Psoas muscle (tissue), 8 donors: ENCODE measurements at regions of chr11 and their contacts with region 1.

Region 1: DNA sequence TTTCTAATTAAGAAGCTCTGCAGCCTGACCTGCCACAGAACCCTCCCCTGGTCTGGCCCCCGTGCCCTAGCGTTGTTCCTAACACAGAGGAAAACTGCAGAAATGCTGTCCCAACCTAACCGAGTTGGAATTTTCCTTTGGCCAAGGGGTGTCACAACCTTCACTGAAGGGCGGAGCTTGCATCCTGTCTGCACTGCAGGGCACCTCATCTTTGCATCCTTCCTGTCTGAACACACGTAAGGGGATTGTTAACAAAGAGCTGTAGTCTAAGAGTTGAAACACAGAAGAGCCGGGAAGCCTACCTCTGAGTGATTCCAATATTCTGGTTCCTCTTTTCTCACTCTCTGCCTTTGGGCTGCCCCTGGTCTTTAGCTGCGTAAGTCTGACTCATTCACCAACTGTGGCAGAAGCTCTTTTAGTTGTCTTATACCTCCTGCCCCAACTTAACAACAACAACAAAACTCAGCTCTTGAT is 1.6 kb downstream of the DIXDC1 start:
- DNase-seq: no peak
- ATAC-seq: peak; percentile 31 to 39 (median 36)
- H3K4me3 ChIP-seq: peak overlapping the region; percentile 86
- H3K27ac ChIP-seq: peak overlapping the region; percentile 89
- H3K4me1 ChIP-seq: peaks cover 49% of the 10 kb centered on the region
- H3K27me3 ChIP-seq: no peaks in the 10 kb centered on the region
- CTCF ChIP-seq: no peak

Region 2: GRCh38 chr11:111957663-111958444 is 19.1 kb after region 1 on chr11:
- intact Hi-C with region 1: loop called in 1 of 2 experiments (anchors 2 kb)
- DNase-seq: peak; percentile 62 to 86
- ATAC-seq: peak; percentile 92 to 94 (median 93)
- H3K4me3 ChIP-seq: no peak overlapping the region
- H3K27ac ChIP-seq: peak overlapping the region; percentile 65
- H3K4me1 ChIP-seq: peaks cover 24% of the 10 kb centered on the region
- H3K27me3 ChIP-seq: no peaks in the 10 kb centered on the region
- CTCF ChIP-seq: no peak

Region 3: GRCh38 chr11:111982019-111982464 is 43.3 kb after region 1 on chr11:
- intact Hi-C with region 1: loop called (anchors 2 kb)
- DNase-seq: peak in 1 of 2 donors; percentile 37
- ATAC-seq: peak; percentile 70 to 80 (median 80)
- H3K4me3 ChIP-seq: no peak overlapping the region
- H3K27ac ChIP-seq: no peak overlapping the region
- H3K4me1 ChIP-seq: peaks cover 30% of the 10 kb centered on the region
- H3K27me3 ChIP-seq: no peaks in the 10 kb centered on the region
- CTCF ChIP-seq: peak; percentile 70

Region 4: GRCh38 chr11:112057170-112057569 is 118.4 kb after region 1 on chr11:
- intact Hi-C with region 1: no loop called
- DNase-seq: no peak
- ATAC-seq: no peak
- H3K4me3 ChIP-seq: no peak overlapping the region
- H3K27ac ChIP-seq: no peak overlapping the region
- H3K4me1 ChIP-seq: no peaks in the 10 kb centered on the region
- H3K27me3 ChIP-seq: no peaks in the 10 kb centered on the region
- CTCF ChIP-seq: no peak